CD8-positive, alpha-beta T cell (primary cell): ENCODE measurements at regions of chr11 and their contacts with region 1.

Region 1: DNA sequence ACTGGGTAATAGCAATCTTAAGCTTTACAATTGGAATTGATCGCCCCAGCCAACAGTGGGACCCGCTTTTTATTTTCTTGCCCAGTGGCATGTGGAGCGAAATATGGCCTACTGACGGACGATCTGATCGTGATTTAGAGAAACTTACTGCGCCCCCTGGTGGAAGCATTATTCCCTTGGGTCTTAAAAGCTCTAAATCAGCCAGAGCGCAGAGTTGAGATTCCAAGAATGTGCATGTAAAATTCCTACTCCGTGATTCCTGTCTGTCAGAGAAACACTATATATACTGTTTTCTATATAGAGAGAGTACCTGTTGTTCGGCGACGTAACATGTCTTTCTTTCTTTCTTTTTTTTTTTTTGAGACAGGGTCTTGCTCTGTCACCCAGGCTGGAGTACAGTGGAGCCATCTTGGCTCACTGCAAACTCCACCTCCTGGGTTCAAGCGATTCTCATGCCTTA is 3.7 kb upstream of the DPF2 start:
- DNase-seq: peak; percentile 63 to 90 (median 86)
- ATAC-seq: peak; percentile 18
- H3K4me3 ChIP-seq: no peak overlapping the region
- H3K4me3 Mint-ChIP-seq: no peak overlapping the region
- H3K27ac ChIP-seq: no peak overlapping the region
- H3K27ac Mint-ChIP-seq: no peak overlapping the region
- H3K4me1 ChIP-seq: peaks cover 11% of the 10 kb centered on the region
- H3K4me1 Mint-ChIP-seq: peaks cover 19% of the 10 kb centered on the region
- H3K27me3 ChIP-seq: no peaks in the 10 kb centered on the region
- H3K27me3 Mint-ChIP-seq: no peaks in the 10 kb centered on the region
- CTCF ChIP-seq: peak; percentile 92

Region 2: DNA sequence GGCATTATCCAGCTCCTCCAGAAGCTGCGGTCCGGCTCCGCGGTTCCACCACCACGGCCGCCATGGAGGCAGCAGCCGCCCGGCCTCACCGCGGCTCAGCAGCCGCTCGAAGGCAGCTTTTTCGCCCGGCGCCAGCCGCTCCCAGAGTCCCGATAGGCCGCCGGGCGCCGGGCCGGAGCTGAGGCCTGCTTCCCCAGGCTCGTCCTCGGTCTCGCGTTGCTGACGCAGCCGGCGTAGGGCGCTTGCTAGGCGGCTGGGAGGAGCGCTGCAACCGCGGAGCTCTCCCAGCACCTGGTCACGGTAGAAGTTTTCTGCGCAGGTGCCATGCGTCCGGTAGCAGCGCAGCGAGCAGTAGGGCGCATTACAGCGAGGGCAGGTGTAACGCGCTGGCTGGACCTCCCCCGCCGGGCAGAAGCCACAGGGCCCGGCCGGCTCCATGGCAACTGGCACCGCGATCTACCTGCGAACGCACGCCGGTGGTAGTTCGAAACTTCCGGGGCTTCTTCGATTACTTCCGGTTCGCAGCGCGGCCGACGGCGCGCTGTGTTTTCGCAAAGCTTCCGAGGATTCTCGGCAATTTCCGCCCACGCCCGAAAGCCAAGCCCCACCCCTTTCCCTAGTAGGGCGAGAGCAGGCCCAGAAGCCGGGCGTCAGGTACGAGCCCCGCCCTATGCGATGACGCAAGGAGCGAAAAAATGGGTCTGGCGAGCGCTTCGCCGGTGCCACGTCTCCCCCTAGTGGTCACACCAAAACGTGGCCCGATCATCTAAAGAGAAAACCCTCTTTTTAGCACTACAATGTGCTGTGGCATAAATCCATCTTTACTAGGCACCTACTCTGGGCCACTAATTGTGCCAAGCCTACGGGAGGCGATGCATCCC is 212.5 kb before region 1 on chr11 and contains the start of gene ZNHIT2:
- CTCF ChIA-PET with region 1: no interaction called
- POLR2A ChIA-PET with region 1: interaction called, 5 read pairs
- intact Hi-C with region 1: loop called in 1 of 2 experiments (anchors 5 kb)
- DNase-seq: peak; percentile 99 to 100 (median 100)
- ATAC-seq: peak; percentile 70
- H3K4me3 ChIP-seq: peak within 1 kb of the TSS; percentile 88
- H3K4me3 Mint-ChIP-seq: peak within 1 kb of the TSS; percentile 88
- H3K27ac ChIP-seq: peak within 1 kb of the TSS; percentile 88 to 95
- H3K27ac Mint-ChIP-seq: peak within 1 kb of the TSS; percentile 96
- H3K4me1 ChIP-seq: peaks cover 49% of the 10 kb centered on the region
- H3K4me1 Mint-ChIP-seq: peaks cover 56% of the 10 kb centered on the region
- H3K27me3 ChIP-seq: no peaks in the 10 kb centered on the region
- H3K27me3 Mint-ChIP-seq: no peaks in the 10 kb centered on the region
- CTCF ChIP-seq: peak; percentile 79
- total RNA-seq, gene ZNHIT2: 8.9 to 9.3 TPM

Region 3: DNA sequence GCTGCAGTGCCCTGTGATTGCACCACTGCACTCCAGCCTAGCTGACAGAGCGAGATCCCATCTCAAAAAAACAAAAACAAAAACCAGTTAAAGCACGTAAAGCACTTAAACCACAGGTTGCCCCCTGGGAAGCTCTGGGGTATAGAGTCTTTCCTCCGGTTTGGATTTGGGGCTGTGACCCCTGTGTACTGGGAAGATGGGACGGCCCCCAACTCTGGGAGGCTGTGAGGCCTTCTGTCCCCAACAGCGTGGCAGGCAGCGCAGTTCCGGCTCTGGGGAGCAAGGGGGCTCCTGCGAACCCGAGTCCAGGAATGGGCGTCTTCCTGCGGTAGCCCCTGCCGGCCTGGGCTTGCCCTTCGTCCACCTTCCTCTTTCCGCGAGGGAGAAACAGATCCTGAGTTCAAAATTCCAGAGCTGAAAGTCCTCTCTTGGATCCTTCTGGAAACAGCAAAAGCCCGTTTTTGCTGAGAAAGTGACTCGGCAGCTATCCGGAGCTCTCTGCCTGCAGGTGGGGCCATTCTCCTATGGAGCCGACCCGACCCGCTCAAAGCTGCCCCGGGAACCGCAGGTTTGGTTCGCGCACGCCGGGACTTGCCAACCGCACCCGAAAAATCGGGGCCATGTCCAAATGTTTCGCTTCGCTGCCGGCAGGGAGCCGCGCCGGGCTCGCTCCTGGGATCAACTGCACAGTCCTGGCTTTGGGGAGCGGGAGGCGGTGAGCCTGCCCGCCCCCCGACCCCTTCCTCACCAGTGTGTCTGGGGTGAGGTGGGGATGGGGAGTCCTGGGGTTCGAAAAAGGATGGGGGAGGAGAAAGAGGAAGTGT is 104.5 kb before region 1 on chr11:
- CTCF ChIA-PET with region 1: interaction called, 67 read pairs
- POLR2A ChIA-PET with region 1: interaction called, 3 read pairs
- intact Hi-C with region 1: loop called (anchors 1 kb)
- DNase-seq: peak in 8 of 9 experiments; percentile 41 to 74 (median 65)
- ATAC-seq: peak; percentile 92
- H3K4me3 ChIP-seq: peak overlapping the region; percentile 39 to 53
- H3K4me3 Mint-ChIP-seq: peak overlapping the region; percentile 74
- H3K27ac ChIP-seq: no peak overlapping the region
- H3K27ac Mint-ChIP-seq: no peak overlapping the region
- H3K4me1 ChIP-seq: peaks cover 13% of the 10 kb centered on the region
- H3K4me1 Mint-ChIP-seq: peaks cover 10% of the 10 kb centered on the region
- H3K27me3 ChIP-seq: peaks cover 0 to 12% of the 10 kb centered on the region in 2 experiments
- H3K27me3 Mint-ChIP-seq: peaks cover 8% of the 10 kb centered on the region
- CTCF ChIP-seq: peak; percentile 41

Region 4: GRCh38 chr11:65274735-65275682 is 55.0 kb before region 1 on chr11:
- CTCF ChIA-PET with region 1: interaction called, 10 read pairs
- POLR2A ChIA-PET with region 1: no interaction called
- intact Hi-C with region 1: loop called (anchors 1 to 2 kb)
- DNase-seq: peak in 5 of 9 experiments; percentile 13 to 59 (median 44)
- ATAC-seq: peak; percentile 48
- H3K4me3 ChIP-seq: no peak overlapping the region
- H3K4me3 Mint-ChIP-seq: no peak overlapping the region
- H3K27ac ChIP-seq: no peak overlapping the region
- H3K27ac Mint-ChIP-seq: no peak overlapping the region
- H3K4me1 ChIP-seq: no peaks in the 10 kb centered on the region
- H3K4me1 Mint-ChIP-seq: no peaks in the 10 kb centered on the region
- H3K27me3 ChIP-seq: no peaks in the 10 kb centered on the region
- H3K27me3 Mint-ChIP-seq: no peaks in the 10 kb centered on the region
- CTCF ChIP-seq: peak; percentile 44

Region 5: GRCh38 chr11:65340226-65340625 is 10.3 kb after region 1 on chr11:
- CTCF ChIA-PET with region 1: interaction called, 28 read pairs
- POLR2A ChIA-PET with region 1: interaction called, 4 read pairs
- intact Hi-C with region 1: no loop called
- DNase-seq: no peak
- ATAC-seq: no peak
- H3K4me3 ChIP-seq: no peak overlapping the region
- H3K4me3 Mint-ChIP-seq: no peak overlapping the region
- H3K27ac ChIP-seq: no peak overlapping the region
- H3K27ac Mint-ChIP-seq: no peak overlapping the region
- H3K4me1 ChIP-seq: peaks cover 11% of the 10 kb centered on the region
- H3K4me1 Mint-ChIP-seq: peaks cover 36% of the 10 kb centered on the region
- H3K27me3 ChIP-seq: no peaks in the 10 kb centered on the region
- H3K27me3 Mint-ChIP-seq: no peaks in the 10 kb centered on the region
- CTCF ChIP-seq: no peak

Region 6: DNA sequence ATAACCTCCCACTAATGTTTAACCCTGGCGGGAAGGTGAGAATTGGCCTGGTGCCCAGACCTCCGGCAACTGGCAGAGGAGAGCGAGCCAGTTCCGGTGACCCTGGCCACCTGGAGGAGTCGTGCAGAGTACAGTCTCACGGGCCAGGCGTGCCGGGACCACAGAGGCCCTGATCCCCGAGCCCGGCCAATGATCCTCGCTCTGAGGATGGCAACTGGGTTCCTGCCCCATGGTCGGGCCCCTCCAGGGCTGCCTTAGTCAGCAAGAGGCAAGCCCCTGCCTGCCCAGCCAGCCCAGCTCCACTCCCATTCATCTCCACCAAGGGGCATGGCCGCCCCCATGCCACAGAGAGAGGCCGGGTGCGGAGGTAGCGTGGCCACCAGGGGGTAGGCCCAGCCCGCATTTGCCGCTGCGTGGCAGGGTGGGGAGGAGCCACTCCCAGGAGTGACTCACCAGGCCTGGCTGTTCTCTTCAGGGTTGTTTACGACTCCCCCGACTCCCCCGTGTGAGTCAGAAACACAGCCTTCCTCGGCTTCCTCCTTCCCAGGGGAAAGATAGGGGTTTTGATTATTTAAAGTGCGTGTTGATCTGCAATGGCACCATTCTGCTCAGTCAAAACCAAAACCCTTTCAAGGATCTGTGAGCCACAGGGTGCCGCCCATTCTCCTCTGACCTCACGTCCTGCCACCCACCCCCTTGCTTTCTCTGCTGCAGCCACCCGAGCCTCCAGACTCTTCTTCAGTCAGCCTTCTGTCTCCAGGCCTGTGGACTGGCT is 52.2 kb after region 1 on chr11 and contains the start of gene SLC25A45:
- CTCF ChIA-PET with region 1: interaction called, 3 read pairs
- POLR2A ChIA-PET with region 1: no interaction called
- intact Hi-C with region 1: loop called in 1 of 2 experiments (anchors 1 kb)
- DNase-seq: peak; percentile 77 to 96 (median 92)
- ATAC-seq: peak; percentile 83
- H3K4me3 ChIP-seq: peak within 1 kb of the TSS; percentile 60 to 98
- H3K4me3 Mint-ChIP-seq: peak within 1 kb of the TSS; percentile 87
- H3K27ac ChIP-seq: peak within 1 kb of the TSS; percentile 97 to 100
- H3K27ac Mint-ChIP-seq: peak within 1 kb of the TSS; percentile 99
- H3K4me1 ChIP-seq: peaks cover 54% of the 10 kb centered on the region
- H3K4me1 Mint-ChIP-seq: peaks cover 42% of the 10 kb centered on the region
- H3K27me3 ChIP-seq: no peaks in the 10 kb centered on the region
- H3K27me3 Mint-ChIP-seq: no peaks in the 10 kb centered on the region
- CTCF ChIP-seq: peak; percentile 81
- total RNA-seq, gene SLC25A45: 27.8 to 29.6 TPM

Region 7: DNA sequence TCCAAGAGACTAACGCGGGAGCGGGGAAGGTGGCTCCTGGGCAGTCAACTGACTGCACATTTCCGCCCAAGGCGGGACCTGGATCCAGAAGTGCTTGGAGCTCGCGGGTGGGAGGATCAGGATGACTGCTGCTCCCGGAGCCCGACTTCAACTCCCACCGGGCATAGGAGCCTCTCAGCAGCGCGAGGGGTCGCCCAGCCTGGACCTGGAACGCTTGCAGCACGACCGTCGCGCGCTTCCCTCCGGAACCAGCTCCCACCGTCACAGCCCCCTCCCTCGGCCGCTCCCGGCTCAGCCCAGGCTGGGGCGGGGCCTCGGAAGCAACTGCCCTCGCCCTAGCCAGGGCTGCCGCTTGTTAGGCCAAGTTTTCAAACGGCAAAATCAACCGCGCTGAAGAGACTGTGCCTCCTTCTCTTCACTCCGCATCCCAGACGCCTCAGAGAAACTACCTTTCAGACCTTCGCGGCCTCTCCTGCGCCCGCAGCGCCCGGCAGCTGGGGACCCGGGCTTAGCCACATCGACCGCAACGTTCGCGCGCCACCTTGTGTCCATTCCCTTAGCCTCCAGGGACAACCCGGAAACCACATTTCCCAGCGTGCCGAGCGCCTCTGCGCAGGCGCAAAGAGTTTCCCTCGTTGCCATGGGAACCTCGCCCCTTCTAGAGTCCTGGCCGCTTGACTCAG is 1987.4 kb after region 1 on chr11:
- CTCF ChIA-PET with region 1: no interaction called
- POLR2A ChIA-PET with region 1: no interaction called
- intact Hi-C with region 1: loop called in 1 of 2 experiments (anchors 5 kb)
- DNase-seq: peak; percentile 96 to 99 (median 98)
- ATAC-seq: peak; percentile 76
- H3K4me3 ChIP-seq: peak overlapping the region; percentile 68 to 82
- H3K4me3 Mint-ChIP-seq: peak overlapping the region; percentile 97
- H3K27ac ChIP-seq: peak overlapping the region; percentile 63 to 73
- H3K27ac Mint-ChIP-seq: peak overlapping the region; percentile 94
- H3K4me1 ChIP-seq: peaks cover 23% of the 10 kb centered on the region
- H3K4me1 Mint-ChIP-seq: peaks cover 32% of the 10 kb centered on the region
- H3K27me3 ChIP-seq: no peaks in the 10 kb centered on the region
- H3K27me3 Mint-ChIP-seq: no peaks in the 10 kb centered on the region
- CTCF ChIP-seq: peak; percentile 70